ENCODE measurements at regions of chr7 and their contacts with region 1.

Region 1: DNA sequence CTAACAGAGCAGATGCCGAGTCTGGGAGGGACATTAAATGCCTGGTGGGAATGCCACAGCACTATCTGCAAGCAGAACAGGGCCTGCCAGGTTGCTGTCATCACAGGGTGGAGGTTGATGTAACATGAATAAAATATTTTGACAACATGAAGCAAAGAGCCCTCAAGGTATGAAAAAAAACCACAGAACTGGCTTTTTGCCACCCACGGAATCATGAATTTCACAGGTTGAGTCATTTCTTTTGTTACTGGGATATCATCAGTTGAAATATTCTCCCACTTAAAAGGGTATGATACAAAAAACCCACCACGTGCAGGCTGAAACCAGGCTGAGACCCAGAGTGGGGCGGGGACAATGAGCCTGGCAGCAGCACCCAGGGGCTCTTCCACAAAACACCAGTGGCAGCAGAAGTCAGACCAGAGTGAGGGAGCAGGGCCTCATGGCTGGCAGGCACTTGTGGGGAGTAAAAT is 220.1 kb downstream of the TNS3 start:
- DNase-seq: peak; percentile 15
- H3K4me3 Mint-ChIP-seq: no peak overlapping the region
- H3K27ac Mint-ChIP-seq: peak overlapping the region; percentile 44
- H3K4me1 Mint-ChIP-seq: peaks cover 5% of the 10 kb centered on the region
- H3K27me3 Mint-ChIP-seq: no peaks in the 10 kb centered on the region

Region 2: GRCh38 chr7:46695051-46695707 is 666.6 kb before region 1 on chr7:
- intact Hi-C with region 1: no loop called
- DNase-seq: no peak
- H3K4me3 Mint-ChIP-seq: no peak overlapping the region
- H3K27ac Mint-ChIP-seq: no peak overlapping the region
- H3K4me1 Mint-ChIP-seq: no peaks in the 10 kb centered on the region
- H3K27me3 Mint-ChIP-seq: no peaks in the 10 kb centered on the region

Region 3: DNA sequence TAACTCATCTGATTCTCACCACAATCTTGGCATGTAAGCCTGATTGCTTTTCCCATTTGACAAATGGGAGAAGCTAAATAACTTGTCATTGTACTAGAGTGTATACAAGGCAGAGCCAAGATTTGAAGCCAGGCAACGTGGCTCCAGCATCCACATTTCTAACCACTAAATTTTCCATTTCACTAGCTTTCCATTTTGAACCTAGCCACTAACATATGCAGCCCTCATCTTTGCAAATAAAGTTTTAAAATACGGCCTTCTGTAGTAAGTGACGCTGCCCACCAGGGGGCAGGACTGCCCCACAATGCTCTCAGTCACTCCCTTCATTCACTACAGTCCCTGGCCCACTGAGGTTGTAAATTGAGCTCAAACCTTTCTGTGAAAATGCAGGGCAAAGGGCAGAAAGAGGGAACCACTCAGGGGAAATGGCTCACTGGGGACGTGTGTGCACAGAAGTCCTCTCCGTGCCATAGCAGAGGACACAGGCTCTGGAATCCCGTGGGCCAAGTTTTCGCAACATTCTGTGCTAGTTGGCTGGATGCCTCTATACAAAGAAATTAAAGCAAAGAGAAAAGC is 95.6 kb before region 1 on chr7:
- intact Hi-C with region 1: loop called (anchors 5 kb)
- DNase-seq: peak; percentile 20
- H3K4me3 Mint-ChIP-seq: no peak overlapping the region
- H3K27ac Mint-ChIP-seq: no peak overlapping the region
- H3K4me1 Mint-ChIP-seq: no peaks in the 10 kb centered on the region
- H3K27me3 Mint-ChIP-seq: peaks cover 2% of the 10 kb centered on the region

Region 4: DNA sequence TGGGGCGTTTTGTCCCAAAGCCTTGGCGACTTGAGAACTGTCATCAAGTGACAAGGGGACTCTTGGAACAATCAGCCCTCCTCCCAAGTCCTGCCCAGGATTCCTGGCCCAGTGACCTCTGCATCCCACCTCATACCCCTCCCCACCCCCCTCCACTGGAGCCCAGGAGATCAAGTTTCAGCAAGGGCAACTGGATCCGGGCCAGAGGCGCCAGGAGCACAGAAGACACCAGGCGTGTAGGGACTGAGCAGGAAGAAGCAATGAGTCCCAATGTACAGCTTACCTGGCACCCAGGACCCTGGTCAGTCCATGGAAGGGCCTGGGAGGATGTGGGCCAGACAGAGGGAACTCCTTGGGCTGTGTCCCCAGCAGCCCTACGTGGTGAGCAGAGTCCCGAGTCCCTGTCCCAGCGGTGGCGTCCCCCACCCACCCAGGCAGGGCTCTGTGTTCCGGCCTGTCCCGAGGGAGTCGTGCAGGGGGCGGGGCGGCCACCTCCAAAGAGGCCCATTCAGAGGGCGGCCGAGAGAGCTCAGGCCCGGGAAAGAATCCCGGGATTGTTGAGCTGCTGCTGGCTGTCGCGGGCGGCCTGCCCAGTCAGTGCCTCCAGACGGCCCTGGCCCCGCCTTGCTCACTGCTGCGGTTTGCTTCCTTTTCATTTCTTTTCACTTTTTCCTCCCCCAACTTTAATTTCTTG is 33.9 kb before region 1 on chr7:
- intact Hi-C with region 1: loop called (anchors 5 kb)
- DNase-seq: no peak
- H3K4me3 Mint-ChIP-seq: no peak overlapping the region
- H3K27ac Mint-ChIP-seq: no peak overlapping the region
- H3K4me1 Mint-ChIP-seq: peaks cover 2% of the 10 kb centered on the region
- H3K27me3 Mint-ChIP-seq: no peaks in the 10 kb centered on the region

Region 5: DNA sequence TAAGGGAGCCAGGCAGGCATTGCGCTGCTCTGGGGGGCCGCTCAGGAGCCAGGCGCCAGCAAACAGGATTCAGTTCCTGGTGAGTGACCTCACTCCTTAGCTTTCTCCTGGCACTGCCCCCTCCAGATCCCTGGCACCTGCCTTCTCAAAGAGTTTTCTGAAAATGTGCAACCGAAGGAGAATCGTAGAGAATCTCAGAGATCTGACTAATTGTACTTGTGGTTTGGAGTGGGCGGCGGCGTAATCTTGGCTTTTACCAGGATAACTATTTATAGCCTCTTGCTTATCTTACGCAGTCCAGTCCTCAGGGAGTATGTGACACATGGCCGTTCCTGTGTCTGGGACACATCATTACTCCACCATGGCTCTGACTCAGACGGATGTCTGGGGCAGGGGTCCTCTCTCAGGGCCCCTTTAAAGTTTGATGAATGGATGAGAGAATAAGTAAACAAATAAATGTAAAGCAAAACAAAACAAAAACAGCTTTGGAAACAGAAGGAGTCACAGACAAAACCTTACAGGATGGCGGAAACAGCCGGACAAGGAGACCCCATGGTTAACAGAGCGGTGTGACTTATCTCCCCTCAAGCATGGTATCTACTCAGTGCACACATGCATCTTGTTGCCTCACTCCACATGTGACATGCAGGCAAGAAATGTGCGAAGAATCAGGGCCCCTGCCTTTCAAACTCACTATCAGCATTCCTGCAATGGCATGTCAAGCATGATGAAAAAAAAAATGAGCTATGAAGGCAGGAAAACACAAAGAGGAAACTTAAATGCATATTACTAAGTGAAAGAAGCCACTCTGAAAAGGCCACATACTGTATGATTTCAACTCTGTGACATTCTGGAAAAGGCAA is 120.5 kb after region 1 on chr7:
- intact Hi-C with region 1: loop called (anchors 2 kb)
- DNase-seq: no peak
- H3K4me3 Mint-ChIP-seq: peak overlapping the region; percentile 20
- H3K27ac Mint-ChIP-seq: peak overlapping the region; percentile 81
- H3K4me1 Mint-ChIP-seq: peaks cover 32% of the 10 kb centered on the region
- H3K27me3 Mint-ChIP-seq: no peaks in the 10 kb centered on the region